CD4-positive, alpha-beta T cell (primary cell): ENCODE measurements at regions of chr6 and their contacts with region 1.

Region 1: DNA sequence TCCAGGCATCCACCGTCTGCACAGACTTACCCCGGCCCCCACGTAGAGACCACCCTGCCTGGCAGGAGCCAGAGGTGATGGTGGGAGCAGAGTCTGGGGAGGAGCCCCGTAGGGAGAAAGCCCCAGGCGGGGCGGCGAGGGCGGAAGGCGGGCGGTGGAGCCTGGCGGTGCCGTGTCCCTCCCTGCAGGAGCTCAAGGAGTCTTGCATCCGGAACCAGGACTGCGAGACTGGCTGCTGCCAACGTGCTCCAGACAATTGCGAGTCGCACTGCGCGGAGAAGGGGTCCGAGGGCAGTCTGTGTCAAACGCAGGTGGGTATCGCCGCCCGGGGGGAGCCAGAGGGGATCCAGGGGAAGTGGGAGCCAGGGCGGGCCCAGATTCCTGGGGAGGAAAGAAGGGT is 6.0 kb downstream of the CLPSL1 start:
- DNase-seq: no peak
- ATAC-seq: no peak
- H3K4me3 ChIP-seq: no peak overlapping the region
- H3K4me3 Mint-ChIP-seq: no peak overlapping the region
- H3K27ac ChIP-seq: no peak overlapping the region
- H3K27ac Mint-ChIP-seq: no peak overlapping the region
- H3K4me1 ChIP-seq: peaks cover 5% of the 10 kb centered on the region
- H3K4me1 Mint-ChIP-seq: no peaks in the 10 kb centered on the region
- H3K27me3 ChIP-seq: peaks cover 29 to 30% of the 10 kb centered on the region in 2 experiments
- H3K27me3 Mint-ChIP-seq: peaks cover 55% of the 10 kb centered on the region
- CTCF ChIP-seq: no peak

Region 2: DNA sequence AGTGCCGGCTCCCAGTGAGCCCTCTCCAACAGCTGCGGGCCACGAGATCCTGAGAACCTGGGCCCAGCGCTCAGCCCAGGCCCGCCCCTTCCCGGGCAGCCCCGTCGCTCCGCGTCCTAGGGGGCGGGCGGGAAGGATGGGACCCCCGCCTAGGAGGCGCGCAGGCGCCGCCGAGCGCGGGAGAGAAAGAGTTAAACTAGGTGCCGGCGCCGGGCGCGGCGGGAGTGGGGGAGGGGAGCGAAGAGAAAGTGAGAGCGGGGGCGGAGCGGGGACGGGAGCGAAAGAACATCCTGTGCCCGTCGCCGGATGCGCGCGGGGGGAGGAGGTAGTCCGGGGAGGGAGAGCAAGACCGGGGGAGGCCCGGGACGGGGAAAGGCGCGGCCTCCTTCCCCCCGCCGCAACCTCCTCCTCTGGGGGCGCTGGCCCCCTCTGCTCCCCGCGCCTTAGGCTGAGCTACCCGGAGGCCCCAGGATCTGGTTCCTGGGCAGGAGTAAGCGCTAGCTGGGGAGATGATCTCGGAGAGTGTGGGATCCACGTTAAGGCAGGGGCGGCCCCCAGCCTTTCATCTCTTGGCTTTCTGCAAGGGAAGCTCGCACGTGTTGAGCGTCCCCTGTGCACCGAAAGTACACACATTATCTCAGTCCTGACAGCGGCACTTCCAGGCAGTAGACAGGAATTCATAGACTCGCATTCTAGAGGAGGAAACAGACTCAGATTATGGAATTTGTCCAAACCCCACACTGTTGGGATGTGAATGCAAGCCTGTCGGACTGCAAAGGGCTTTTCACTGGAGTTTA is 54.9 kb before region 1 on chr6:
- CTCF ChIA-PET with region 1: no interaction called
- POLR2A ChIA-PET with region 1: no interaction called
- intact Hi-C with region 1: no loop called
- DNase-seq: peak; percentile 88 to 98 (median 94)
- ATAC-seq: peak; percentile 55
- H3K4me3 ChIP-seq: peak overlapping the region; percentile 87
- H3K4me3 Mint-ChIP-seq: peak overlapping the region; percentile 96
- H3K27ac ChIP-seq: peak overlapping the region; percentile 94 to 96
- H3K27ac Mint-ChIP-seq: peak overlapping the region; percentile 87
- H3K4me1 ChIP-seq: peaks cover 97% of the 10 kb centered on the region
- H3K4me1 Mint-ChIP-seq: peaks cover 92% of the 10 kb centered on the region
- H3K27me3 ChIP-seq: no peaks in the 10 kb centered on the region
- H3K27me3 Mint-ChIP-seq: no peaks in the 10 kb centered on the region
- CTCF ChIP-seq: no peak

Region 3: GRCh38 chr6:35797837-35798526 is 11.2 kb after region 1 on chr6:
- CTCF ChIA-PET with region 1: no interaction called
- POLR2A ChIA-PET with region 1: no interaction called
- intact Hi-C with region 1: loop called (anchors 1 kb)
- DNase-seq: no peak
- ATAC-seq: no peak
- H3K4me3 ChIP-seq: no peak overlapping the region
- H3K4me3 Mint-ChIP-seq: no peak overlapping the region
- H3K27ac ChIP-seq: no peak overlapping the region
- H3K27ac Mint-ChIP-seq: no peak overlapping the region
- H3K4me1 ChIP-seq: no peaks in the 10 kb centered on the region
- H3K4me1 Mint-ChIP-seq: no peaks in the 10 kb centered on the region
- H3K27me3 ChIP-seq: no peaks in the 10 kb centered on the region
- H3K27me3 Mint-ChIP-seq: peaks cover 7% of the 10 kb centered on the region
- CTCF ChIP-seq: no peak